ENCODE measurements at regions of chr16 and their contacts with region 1.

Region 1: DNA sequence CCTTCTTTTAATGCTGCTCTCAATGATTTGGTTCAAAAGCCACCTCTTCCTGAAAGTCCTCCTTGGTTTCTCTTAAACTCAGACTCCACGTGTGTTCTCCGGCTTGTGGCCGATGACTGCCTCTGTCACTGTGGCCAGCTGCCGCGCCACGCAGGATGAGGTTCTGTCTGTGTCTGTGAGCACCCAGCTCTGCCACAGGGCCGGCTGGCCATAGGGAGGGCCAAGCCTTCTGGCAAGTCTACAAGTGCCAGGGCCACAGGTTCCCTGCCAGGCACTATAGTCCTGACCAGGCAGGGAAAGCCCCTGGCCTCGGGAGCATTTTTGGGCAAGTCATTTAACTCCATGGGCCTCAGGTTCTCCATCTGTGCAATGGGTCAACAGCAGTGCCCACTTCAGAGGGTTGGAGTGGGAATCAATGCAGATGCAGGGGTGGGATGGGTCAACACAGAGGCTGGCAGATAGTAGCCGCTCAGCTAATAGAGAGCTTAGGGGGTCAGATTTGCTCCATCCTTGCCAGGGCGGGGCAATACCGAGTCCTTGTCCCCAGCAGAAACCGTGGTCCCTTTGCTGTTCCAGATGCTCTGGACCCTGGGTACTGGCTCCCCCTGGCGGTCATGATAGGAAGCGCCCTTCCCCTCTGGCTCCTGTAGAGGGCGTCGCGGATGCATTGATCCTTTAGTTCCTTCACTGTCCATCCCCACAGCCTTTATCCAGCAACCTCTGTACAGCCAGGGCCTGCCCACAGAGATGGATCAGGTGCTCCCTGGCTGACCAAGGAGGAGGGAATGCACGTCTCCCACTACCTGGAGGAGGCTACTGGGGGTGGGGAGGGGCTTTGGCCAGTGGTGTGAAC is 19.3 kb upstream of the ADGRG3 start:
- DNase-seq: peak; percentile 93
- ATAC-seq: peak; percentile 67
- H3K4me3 Mint-ChIP-seq: no peak overlapping the region
- H3K27ac Mint-ChIP-seq: peak overlapping the region; percentile 82
- H3K4me1 Mint-ChIP-seq: peaks cover 59% of the 10 kb centered on the region
- H3K27me3 Mint-ChIP-seq: no peaks in the 10 kb centered on the region

Region 2: GRCh38 chr16:57591086-57591869 is 57.5 kb before region 1 on chr16:
- CTCF ChIA-PET with region 1: interaction called, 128 read pairs
- POLR2A ChIA-PET with region 1: interaction called, 33 read pairs
- DNase-seq: peak; percentile 85
- ATAC-seq: peak; percentile 71
- H3K4me3 Mint-ChIP-seq: peak overlapping the region; percentile 68
- H3K27ac Mint-ChIP-seq: peak overlapping the region; percentile 92
- H3K4me1 Mint-ChIP-seq: peaks cover 77% of the 10 kb centered on the region
- H3K27me3 Mint-ChIP-seq: no peaks in the 10 kb centered on the region

Region 3: GRCh38 chr16:57609541-57610401 is 39.0 kb before region 1 on chr16:
- CTCF ChIA-PET with region 1: interaction called, 134 read pairs
- POLR2A ChIA-PET with region 1: interaction called, 12 read pairs
- DNase-seq: peak; percentile 84
- ATAC-seq: peak; percentile 95
- H3K4me3 Mint-ChIP-seq: peak overlapping the region; percentile 66
- H3K27ac Mint-ChIP-seq: peak overlapping the region; percentile 96
- H3K4me1 Mint-ChIP-seq: peaks cover 76% of the 10 kb centered on the region
- H3K27me3 Mint-ChIP-seq: no peaks in the 10 kb centered on the region

Region 4: DNA sequence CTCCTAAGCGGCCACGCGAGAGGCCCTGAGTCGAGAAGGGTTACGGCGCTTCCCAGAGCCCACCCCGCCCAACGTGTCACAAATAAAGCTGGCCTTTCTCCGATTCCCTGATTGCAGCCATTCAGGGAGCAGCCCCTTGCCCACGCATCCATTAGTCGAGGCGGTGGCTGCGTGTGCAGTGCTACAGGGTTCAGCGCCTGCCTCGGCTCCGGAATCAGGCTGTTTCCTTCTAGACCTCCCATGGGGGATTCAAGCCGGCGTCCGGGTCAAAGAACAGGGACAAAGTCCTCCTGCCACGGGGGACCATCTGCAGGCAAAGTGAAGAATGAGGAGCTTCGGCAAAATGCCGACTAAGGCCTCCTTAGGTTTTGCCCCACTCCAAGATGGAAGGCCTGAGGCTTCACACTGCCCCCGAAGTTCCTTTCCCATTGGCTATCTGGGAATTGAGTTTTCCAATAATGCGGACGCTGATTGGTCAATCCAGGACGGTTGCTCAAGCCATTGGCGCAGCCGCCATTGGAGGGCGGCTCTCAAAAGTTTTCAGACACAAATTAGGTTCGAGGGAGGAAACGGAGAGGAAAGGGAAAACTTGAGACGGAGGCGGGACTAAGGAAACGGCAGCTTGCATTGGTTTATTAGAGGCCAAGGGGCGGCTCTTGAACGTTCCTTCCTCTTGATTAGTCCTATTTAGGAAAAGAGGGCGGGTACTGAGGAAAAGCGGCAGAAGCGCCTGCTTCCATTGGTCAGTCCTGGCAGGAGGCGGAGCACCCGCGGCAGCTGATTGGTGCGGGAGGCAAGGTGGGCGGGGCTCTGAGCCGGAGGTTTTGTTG is 86.3 kb after region 1 on chr16:
- CTCF ChIA-PET with region 1: interaction called, 18 read pairs
- POLR2A ChIA-PET with region 1: interaction called, 3 read pairs
- DNase-seq: peak; percentile 99
- ATAC-seq: peak; percentile 92
- H3K4me3 Mint-ChIP-seq: peak overlapping the region; percentile 90
- H3K27ac Mint-ChIP-seq: peak overlapping the region; percentile 94
- H3K4me1 Mint-ChIP-seq: peaks cover 33% of the 10 kb centered on the region
- H3K27me3 Mint-ChIP-seq: no peaks in the 10 kb centered on the region

Measured in activated CD8-positive, alpha-beta T cell treated with anti-CD3 and anti-CD28 coated beads, Interleukin-2, amount 10 ng/mL, durations not matched to agents 7 days and 5 days (primary cell).